Sigmoid colon (tissue), 7 donors: ENCODE measurements at regions of chr2 and their contacts with region 1.

Region 1: GRCh38 chr2:219177552-219178376 is at the start of gene RETREG2:
- DNase-seq: peak; percentile 94
- H3K4me3 ChIP-seq: peak within 1 kb of the TSS; percentile 64 to 97 (median 86)
- H3K27ac ChIP-seq: peak within 1 kb of the TSS; percentile 91 to 99 (median 94)
- H3K4me1 ChIP-seq: peaks cover 2 to 39% (median 31%) of the 10 kb centered on the region in 4 donors
- H3K27me3 ChIP-seq: no peaks in the 10 kb centered on the region
- CTCF ChIP-seq: peak in 1 of 4 experiments; percentile 25
- EP300 ChIP-seq: peak in 1 of 4 donors; percentile 28
- POLR2A ChIP-seq: peak; percentile 98 to 99
- total RNA-seq, gene RETREG2: 37.3 to 48.2 (median 43.2) TPM

Region 2: GRCh38 chr2:219206442-219207253 is 28.9 kb after region 1 on chr2 and contains the start of gene ZFAND2B:
- intact Hi-C with region 1: loop called (anchors 1 kb)
- DNase-seq: peak; percentile 97
- H3K4me3 ChIP-seq: peak within 1 kb of the TSS; percentile 62 to 76 (median 68)
- H3K27ac ChIP-seq: peak within 1 kb of the TSS; percentile 93 to 97 (median 96)
- H3K4me1 ChIP-seq: peaks cover 0 to 22% (median 19%) of the 10 kb centered on the region in 4 donors
- H3K27me3 ChIP-seq: no peaks in the 10 kb centered on the region
- CTCF ChIP-seq: peak in 3 of 4 experiments; percentile 4 to 24 (median 9)
- EP300 ChIP-seq: no peak
- POLR2A ChIP-seq: peak; percentile 90 to 96
- total RNA-seq, gene ZFAND2B: 26.9 to 55.8 (median 45.6) TPM

Region 3: DNA sequence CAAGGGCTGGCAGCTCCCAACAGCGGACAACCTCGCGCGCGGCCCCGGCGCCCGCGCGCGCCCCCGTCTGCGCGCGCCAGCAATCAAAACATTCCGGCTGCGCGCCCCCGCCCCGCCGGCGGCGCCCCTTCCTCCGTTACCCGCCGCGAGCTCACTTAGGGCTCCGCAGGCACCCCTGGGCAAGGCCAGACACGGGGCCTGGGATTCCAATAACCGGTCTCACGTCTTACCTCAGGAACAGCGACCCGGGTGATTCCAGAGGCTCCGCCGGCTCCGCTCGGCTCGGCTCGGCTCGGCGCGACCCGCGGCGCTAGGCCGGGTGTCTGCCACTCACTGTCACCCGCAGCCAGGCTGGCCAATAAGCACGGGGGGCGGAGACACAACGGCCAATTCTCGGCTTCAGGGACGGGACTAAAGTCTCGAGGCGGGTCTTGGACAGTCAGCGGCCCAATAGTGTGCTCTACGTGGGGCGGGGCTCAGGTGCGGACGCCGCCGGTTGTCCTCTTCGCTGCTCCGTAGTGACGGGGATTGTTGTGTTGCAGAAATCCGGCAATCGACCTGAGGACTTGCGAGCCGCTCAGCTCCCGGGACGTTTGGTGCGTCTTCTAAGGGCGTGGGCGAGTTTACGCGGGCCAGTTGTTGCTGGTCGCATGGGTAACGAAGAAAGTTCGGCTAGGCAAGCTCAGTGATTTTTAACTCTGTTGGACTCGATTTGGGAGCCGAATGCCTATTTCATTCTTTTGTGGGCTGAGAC is 51.7 kb after region 1 on chr2 and contains the starts of genes ANKZF1 and ATG9A:
- intact Hi-C with region 1: loop called (anchors 1 kb)
- DNase-seq: peak; percentile 100
- H3K4me3 ChIP-seq: peak within 1 kb of the TSS; percentile 57 to 79 (median 68)
- H3K27ac ChIP-seq: peak within 1 kb of the TSS; percentile 89 to 94 (median 94)
- H3K4me1 ChIP-seq: peaks cover 0 to 35% (median 31%) of the 10 kb centered on the region in 4 donors
- H3K27me3 ChIP-seq: no peaks in the 10 kb centered on the region
- CTCF ChIP-seq: no peak
- EP300 ChIP-seq: peak in 1 of 4 donors; percentile 64
- POLR2A ChIP-seq: peak; percentile 68 to 73
- total RNA-seq, gene ANKZF1: 28.1 to 52.6 (median 41.1) TPM
- total RNA-seq, gene ATG9A: 28.8 to 32.0 (median 29.8) TPM

Region 4: DNA sequence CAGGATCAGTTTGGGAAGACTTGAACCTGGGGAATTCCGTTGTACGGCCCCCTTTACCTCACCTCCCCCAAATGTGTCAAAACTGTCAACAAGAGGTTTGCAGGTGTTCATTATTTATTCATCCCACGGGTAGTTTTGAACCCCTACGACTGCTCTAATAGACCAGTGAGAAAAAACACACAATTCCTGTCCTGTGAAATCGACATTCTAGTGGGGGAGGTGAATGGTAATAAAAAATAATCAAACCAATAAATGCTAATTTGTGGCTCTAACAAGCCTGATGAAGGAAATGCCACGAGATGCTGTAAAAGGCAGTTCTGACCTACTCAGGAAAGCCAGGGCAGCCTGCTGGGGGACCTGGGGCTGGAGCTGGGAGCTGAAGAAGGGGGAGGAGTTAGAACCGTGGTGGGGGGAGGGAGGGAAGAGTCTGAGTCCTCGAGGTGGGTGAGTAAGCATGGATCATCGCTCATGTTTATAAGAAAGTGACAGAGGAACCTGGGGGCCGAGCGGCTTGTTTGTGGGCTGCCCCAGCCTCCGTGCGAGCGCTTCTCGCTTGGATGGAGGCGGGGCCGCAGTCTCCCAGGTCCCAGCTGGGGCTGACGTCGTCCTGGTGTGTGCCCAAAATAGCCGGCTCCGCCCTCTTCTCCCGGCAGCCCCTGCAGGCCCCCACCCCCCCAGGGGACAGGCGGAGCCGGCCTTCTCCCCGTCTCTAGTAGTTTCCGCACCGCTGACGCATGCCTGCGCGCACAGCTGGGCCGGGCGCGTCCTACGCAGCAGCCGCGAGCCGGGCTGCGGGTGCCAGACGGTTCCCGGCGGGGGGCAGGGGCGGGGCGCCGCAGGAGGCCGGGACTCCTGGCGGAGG is 101.1 kb after region 1 on chr2 and contains the start of gene DNAJB2:
- intact Hi-C with region 1: loop called (anchors 2 kb)
- DNase-seq: peak; percentile 100
- H3K4me3 ChIP-seq: peak within 1 kb of the TSS; percentile 72 to 86 (median 75)
- H3K27ac ChIP-seq: peak within 1 kb of the TSS; percentile 94 to 99 (median 95)
- H3K4me1 ChIP-seq: peaks cover 0 to 52% (median 45%) of the 10 kb centered on the region in 4 donors
- H3K27me3 ChIP-seq: no peaks in the 10 kb centered on the region
- CTCF ChIP-seq: no peak
- EP300 ChIP-seq: peak; percentile 16 to 97 (median 50)
- POLR2A ChIP-seq: peak; percentile 56 to 73
- total RNA-seq, gene DNAJB2: 27.4 to 42.1 (median 40.0) TPM

Region 5: DNA sequence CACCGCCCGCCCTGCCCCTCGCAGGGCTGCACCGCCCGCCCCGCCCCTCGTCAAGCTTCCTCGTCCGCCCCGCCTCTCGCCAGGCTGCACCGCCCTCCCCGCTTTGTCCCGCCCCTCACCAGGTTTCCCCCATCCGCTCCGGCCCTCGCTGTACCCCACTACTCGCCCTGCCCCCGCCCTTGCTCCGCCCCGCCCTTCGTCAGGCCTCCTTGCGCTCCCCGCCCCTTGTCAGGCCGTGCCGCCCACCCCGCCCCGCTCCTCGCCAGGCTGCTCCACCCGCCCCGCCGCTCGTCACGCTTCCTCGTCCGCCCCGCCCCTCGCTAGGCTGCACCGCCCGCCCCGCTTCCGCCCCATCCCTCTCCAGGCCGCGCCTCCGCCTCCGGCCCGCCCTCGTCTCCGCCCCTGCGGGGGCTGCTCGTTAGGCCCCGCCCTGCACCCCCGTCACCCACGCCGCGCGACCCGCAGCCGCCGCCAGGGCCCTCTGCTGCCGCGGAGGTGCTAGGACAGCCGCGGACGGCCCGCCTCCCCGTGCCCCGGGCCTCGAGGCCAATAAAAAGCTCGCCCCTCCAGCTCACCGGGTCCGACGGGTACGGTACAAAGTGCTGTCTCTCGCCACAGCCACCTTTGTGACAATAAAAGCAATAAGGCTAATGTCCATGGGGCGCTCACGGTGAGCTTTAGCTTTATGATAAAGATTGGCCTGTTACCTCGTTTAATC is 210.5 kb after region 1 on chr2:
- intact Hi-C with region 1: loop called (anchors 5 kb)
- DNase-seq: peak; percentile 100
- H3K4me3 ChIP-seq: peak overlapping the region; percentile 16 to 88 (median 84)
- H3K27ac ChIP-seq: peak overlapping the region; percentile 94 to 97 (median 96)
- H3K4me1 ChIP-seq: peaks cover 0 to 32% (median 26%) of the 10 kb centered on the region in 4 donors
- H3K27me3 ChIP-seq: no peaks in the 10 kb centered on the region
- CTCF ChIP-seq: peak; percentile 35 to 68 (median 48)
- EP300 ChIP-seq: no peak
- POLR2A ChIP-seq: no peak